ENCODE measurements at regions of chr6 and their contacts with region 1.

Region 1: DNA sequence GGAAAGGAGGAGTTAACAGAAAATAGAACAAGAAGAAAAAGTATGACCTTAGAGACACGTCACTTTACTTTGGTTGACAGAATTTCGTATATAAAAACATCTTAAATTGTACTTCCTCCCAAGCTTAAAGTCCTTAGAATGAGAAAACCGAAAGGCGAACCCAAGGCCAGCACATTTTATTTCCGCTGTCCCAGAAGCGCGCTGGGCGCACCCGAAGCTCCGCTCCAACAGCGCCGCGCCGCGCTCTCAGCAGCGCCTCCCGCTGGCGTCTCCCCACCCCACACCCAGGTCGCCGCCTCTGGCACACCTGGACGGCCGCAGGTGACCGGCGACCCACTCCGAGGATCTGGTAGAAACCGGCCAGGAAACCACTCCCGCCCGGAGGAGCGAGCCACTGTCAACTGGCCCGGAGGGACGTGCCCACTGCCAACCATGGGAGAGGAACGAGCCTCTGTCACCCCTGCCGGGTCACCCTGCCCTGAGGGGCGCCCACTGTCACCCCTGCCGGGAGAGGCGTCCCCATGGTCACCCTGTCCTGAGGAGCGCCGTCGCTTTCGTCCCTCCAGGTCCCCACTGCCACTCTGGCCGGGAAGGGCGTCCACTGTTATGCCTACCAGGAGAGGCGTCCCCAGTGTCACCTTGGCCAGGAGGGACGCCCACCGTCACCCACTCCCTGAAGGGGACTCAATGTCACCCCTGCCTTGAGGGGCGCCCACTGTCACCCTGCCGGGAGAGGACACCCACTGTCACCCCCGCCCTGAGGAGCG is 824 bp downstream of the MPC1 start:
- DNase-seq: peak; percentile 82
- ATAC-seq: peak; percentile 43
- H3K4me3 Mint-ChIP-seq: peak overlapping the region; percentile 94
- H3K27ac Mint-ChIP-seq: peak overlapping the region; percentile 86
- H3K4me1 Mint-ChIP-seq: peaks cover 16% of the 10 kb centered on the region
- H3K27me3 Mint-ChIP-seq: no peaks in the 10 kb centered on the region

Region 2: DNA sequence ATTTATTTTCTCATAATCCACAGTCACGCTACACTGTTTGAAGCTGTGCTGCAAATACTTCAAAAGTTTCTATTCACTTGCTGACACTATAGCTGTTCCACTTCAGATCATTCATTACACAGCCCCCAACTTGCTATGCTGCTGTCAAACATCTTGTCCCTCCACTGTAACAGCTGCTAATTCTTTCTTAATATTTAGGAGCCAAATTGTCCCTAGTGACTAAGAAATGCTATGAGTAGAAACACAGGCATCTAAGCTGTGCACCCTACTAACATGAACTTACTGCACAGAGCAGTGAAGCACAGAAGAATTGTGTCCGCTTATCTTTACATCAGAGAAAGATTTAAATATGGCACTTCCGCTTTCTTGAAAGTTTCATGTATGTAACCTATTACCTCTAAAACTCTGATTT is 810.2 kb before region 1 on chr6:
- CTCF ChIA-PET with region 1: no interaction called
- POLR2A ChIA-PET with region 1: no interaction called
- DNase-seq: no peak
- ATAC-seq: no peak
- H3K4me3 Mint-ChIP-seq: no peak overlapping the region
- H3K27ac Mint-ChIP-seq: no peak overlapping the region
- H3K4me1 Mint-ChIP-seq: no peaks in the 10 kb centered on the region
- H3K27me3 Mint-ChIP-seq: no peaks in the 10 kb centered on the region

Region 3: DNA sequence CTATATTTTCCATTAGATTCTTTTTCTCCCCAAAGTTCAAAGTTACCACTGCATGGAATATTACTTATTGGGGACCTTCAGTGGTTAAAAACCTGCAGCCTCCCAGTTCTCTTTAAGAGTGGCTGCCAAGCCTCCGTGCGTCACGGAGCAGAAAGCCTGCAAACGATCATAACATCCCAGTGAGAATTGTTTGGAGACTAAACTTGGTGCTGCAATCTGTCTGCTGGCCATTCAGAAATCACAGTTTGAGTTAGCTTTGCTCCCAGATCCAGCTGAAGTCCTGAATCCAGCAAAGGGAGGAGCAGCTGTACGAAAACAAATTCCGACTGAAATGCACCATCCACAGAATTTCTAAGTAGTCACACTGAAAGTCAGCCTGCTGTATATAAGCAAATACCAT is 505.3 kb before region 1 on chr6:
- CTCF ChIA-PET with region 1: no interaction called
- POLR2A ChIA-PET with region 1: no interaction called
- DNase-seq: no peak
- ATAC-seq: no peak
- H3K4me3 Mint-ChIP-seq: no peak overlapping the region
- H3K27ac Mint-ChIP-seq: no peak overlapping the region
- H3K4me1 Mint-ChIP-seq: no peaks in the 10 kb centered on the region
- H3K27me3 Mint-ChIP-seq: peaks cover 14% of the 10 kb centered on the region

Region 4: GRCh38 chr6:166281104-166281503 is 100.8 kb before region 1 on chr6:
- CTCF ChIA-PET with region 1: interaction called, 49 read pairs
- POLR2A ChIA-PET with region 1: interaction called, 3 read pairs
- DNase-seq: no peak
- ATAC-seq: no peak
- H3K4me3 Mint-ChIP-seq: no peak overlapping the region
- H3K27ac Mint-ChIP-seq: no peak overlapping the region
- H3K4me1 Mint-ChIP-seq: peaks cover 1% of the 10 kb centered on the region
- H3K27me3 Mint-ChIP-seq: peaks cover 17% of the 10 kb centered on the region

Region 5: DNA sequence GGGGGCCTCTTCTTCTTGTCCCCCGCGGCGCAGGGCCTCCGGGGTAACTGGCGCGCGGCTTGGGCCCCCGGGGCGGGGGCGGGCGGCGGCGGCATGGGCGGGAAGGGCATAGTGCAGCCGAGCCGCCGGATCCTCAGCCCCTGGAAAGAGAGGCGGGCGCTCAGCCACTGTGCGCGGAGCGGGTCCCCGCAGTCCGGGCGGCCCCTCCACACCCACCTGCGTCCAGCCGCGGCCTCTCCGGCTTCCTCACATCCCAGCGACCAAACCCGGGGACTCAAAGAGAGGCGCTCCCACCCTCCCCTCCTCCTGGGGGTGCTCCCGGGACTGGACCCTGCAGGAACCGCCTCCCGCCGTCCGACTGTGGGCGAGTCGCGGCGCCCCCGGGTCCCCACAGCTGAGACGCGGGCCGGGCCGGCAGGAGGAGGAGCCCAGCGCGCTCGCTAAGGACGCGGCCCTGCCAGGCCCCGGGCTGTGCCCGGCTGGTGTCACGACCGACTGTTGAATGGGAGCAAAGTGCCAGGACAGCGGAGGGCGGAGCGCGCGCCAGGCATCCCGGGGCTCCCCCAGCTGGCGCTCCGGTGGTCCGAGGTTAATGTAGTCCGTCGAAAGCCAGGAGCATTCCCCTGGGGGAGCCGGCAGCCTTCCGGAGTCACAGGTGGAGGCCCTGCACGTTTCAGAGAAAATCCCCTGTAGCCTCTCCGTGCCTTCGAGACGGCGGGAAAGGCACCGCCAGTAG is 73.7 kb before region 1 on chr6 and contains the start of gene PRR18:
- CTCF ChIA-PET with region 1: interaction called, 55 read pairs
- POLR2A ChIA-PET with region 1: no interaction called
- DNase-seq: no peak
- ATAC-seq: peak; percentile 47
- H3K4me3 Mint-ChIP-seq: no peak within 1 kb of the TSS
- H3K27ac Mint-ChIP-seq: no peak within 1 kb of the TSS
- H3K4me1 Mint-ChIP-seq: peaks cover 1% of the 10 kb centered on the region
- H3K27me3 Mint-ChIP-seq: peaks cover 56% of the 10 kb centered on the region
- total RNA-seq, gene PRR18: not detected

Region 6: GRCh38 chr6:166325383-166326042 is 56.4 kb before region 1 on chr6:
- CTCF ChIA-PET with region 1: interaction called, 10 read pairs
- POLR2A ChIA-PET with region 1: no interaction called
- DNase-seq: no peak
- ATAC-seq: no peak
- H3K4me3 Mint-ChIP-seq: no peak overlapping the region
- H3K27ac Mint-ChIP-seq: no peak overlapping the region
- H3K4me1 Mint-ChIP-seq: no peaks in the 10 kb centered on the region
- H3K27me3 Mint-ChIP-seq: no peaks in the 10 kb centered on the region

Region 7: GRCh38 chr6:166342349-166343149 is 39.4 kb before region 1 on chr6 and contains the start of gene SFT2D1:
- CTCF ChIA-PET with region 1: interaction called, 32 read pairs
- POLR2A ChIA-PET with region 1: interaction called, 4 read pairs
- DNase-seq: peak; percentile 87
- ATAC-seq: peak; percentile 81
- H3K4me3 Mint-ChIP-seq: peak within 1 kb of the TSS; percentile 78
- H3K27ac Mint-ChIP-seq: peak within 1 kb of the TSS; percentile 93
- H3K4me1 Mint-ChIP-seq: peaks cover 8% of the 10 kb centered on the region
- H3K27me3 Mint-ChIP-seq: peaks cover 14% of the 10 kb centered on the region
- total RNA-seq, gene SFT2D1: 27.7 to 30.5 TPM

Region 8: GRCh38 chr6:166402582-166403277 is 20.8 kb after region 1 on chr6:
- CTCF ChIA-PET with region 1: interaction called, 39 read pairs
- POLR2A ChIA-PET with region 1: no interaction called
- DNase-seq: no peak
- ATAC-seq: no peak
- H3K4me3 Mint-ChIP-seq: no peak overlapping the region
- H3K27ac Mint-ChIP-seq: no peak overlapping the region
- H3K4me1 Mint-ChIP-seq: peaks cover 2% of the 10 kb centered on the region
- H3K27me3 Mint-ChIP-seq: peaks cover 11% of the 10 kb centered on the region

Region 9: DNA sequence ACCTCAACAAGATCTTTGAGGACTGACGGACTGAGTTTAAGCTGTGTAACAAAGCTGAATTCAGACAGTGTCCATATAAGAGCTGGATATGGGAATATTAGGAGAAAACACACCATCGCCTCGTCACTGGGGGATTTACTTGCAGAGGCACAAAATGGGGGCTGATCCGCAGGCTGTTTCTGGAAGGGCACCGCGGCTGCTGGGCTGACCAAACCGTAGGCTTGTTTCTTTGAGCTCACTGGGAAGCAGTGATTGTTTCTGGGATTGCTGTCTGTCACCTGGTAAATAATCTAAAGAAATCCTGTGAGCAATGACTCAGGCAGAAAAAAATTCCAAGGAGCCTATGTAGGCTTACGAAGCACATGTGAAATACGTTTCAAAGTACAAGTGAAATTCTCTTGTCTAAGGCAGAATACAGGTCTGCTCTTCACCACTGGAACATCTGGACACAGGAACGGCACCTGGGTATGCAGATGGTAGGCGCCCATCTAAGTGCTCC is 64.7 kb after region 1 on chr6:
- CTCF ChIA-PET with region 1: no interaction called
- POLR2A ChIA-PET with region 1: no interaction called
- DNase-seq: no peak
- ATAC-seq: no peak
- H3K4me3 Mint-ChIP-seq: no peak overlapping the region
- H3K27ac Mint-ChIP-seq: no peak overlapping the region
- H3K4me1 Mint-ChIP-seq: no peaks in the 10 kb centered on the region
- H3K27me3 Mint-ChIP-seq: peaks cover 4% of the 10 kb centered on the region

Measured in activated CD8-positive, alpha-beta T cell treated with anti-CD3 and anti-CD28 coated beads, Interleukin-2, amount 10 ng/mL, durations not matched to agents 7 days and 5 days (primary cell).